CD4-positive, alpha-beta T cell (primary cell): ENCODE measurements at regions of chr5 and their contacts with region 1.

Region 1: GRCh38 chr5:132829742-132830435 is 558 bp downstream of the SHROOM1 start:
- DNase-seq: peak; percentile 49 to 86 (median 66)
- ATAC-seq: peak; percentile 87
- H3K4me3 ChIP-seq: peak overlapping the region; percentile 40
- H3K4me3 Mint-ChIP-seq: peak overlapping the region; percentile 89
- H3K27ac ChIP-seq: no peak overlapping the region
- H3K27ac Mint-ChIP-seq: no peak overlapping the region
- H3K4me1 ChIP-seq: peaks cover 22% of the 10 kb centered on the region
- H3K4me1 Mint-ChIP-seq: peaks cover 17% of the 10 kb centered on the region
- H3K27me3 ChIP-seq: peaks cover 36 to 50% of the 10 kb centered on the region in 2 experiments
- H3K27me3 Mint-ChIP-seq: peaks cover 62% of the 10 kb centered on the region
- CTCF ChIP-seq: peak; percentile 78

Region 2: GRCh38 chr5:132807163-132807838 is 22.6 kb before region 1 on chr5:
- CTCF ChIA-PET with region 1: no interaction called
- POLR2A ChIA-PET with region 1: no interaction called
- intact Hi-C with region 1: no loop called
- DNase-seq: no peak
- ATAC-seq: no peak
- H3K4me3 ChIP-seq: no peak overlapping the region
- H3K4me3 Mint-ChIP-seq: no peak overlapping the region
- H3K27ac ChIP-seq: no peak overlapping the region
- H3K27ac Mint-ChIP-seq: no peak overlapping the region
- H3K4me1 ChIP-seq: peaks cover 3% of the 10 kb centered on the region
- H3K4me1 Mint-ChIP-seq: peaks cover 8% of the 10 kb centered on the region
- H3K27me3 ChIP-seq: peaks cover 18 to 35% of the 10 kb centered on the region in 2 experiments
- H3K27me3 Mint-ChIP-seq: peaks cover 89% of the 10 kb centered on the region
- CTCF ChIP-seq: no peak

Region 3: DNA sequence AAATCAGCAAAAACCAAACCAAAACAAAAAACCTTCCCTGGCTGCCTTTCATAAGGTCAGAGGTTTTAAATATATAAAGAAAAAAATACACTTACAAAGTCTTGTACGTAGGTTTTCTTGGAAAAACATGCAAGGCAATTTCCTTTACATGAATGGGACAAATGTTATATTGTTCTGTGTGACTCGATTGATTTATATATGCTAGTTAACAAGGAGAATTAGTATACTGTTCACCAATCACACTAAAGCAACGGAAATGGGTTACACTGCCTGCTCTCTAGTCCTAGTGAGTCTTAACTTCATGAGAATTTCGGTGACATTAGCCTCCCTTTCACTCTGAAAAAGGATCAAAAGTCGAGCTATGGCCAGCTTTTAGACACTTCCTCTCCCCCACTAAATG is 30.9 kb after region 1 on chr5:
- CTCF ChIA-PET with region 1: interaction called, 7 read pairs
- POLR2A ChIA-PET with region 1: no interaction called
- intact Hi-C with region 1: loop called in 1 of 2 experiments (anchors 1 kb)
- DNase-seq: no peak
- ATAC-seq: no peak
- H3K4me3 ChIP-seq: no peak overlapping the region
- H3K4me3 Mint-ChIP-seq: no peak overlapping the region
- H3K27ac ChIP-seq: no peak overlapping the region
- H3K27ac Mint-ChIP-seq: no peak overlapping the region
- H3K4me1 ChIP-seq: peaks cover 5% of the 10 kb centered on the region
- H3K4me1 Mint-ChIP-seq: peaks cover 6% of the 10 kb centered on the region
- H3K27me3 ChIP-seq: no peaks in the 10 kb centered on the region
- H3K27me3 Mint-ChIP-seq: peaks cover 5% of the 10 kb centered on the region
- CTCF ChIP-seq: no peak

Region 4: GRCh38 chr5:132883261-132883834 is 53.5 kb after region 1 on chr5:
- CTCF ChIA-PET with region 1: interaction called, 13 read pairs
- POLR2A ChIA-PET with region 1: no interaction called
- intact Hi-C with region 1: loop called (anchors 1 to 5 kb)
- DNase-seq: peak in 5 of 14 experiments; percentile 7 to 73 (median 54)
- ATAC-seq: peak; percentile 83
- H3K4me3 ChIP-seq: no peak overlapping the region
- H3K4me3 Mint-ChIP-seq: no peak overlapping the region
- H3K27ac ChIP-seq: no peak overlapping the region
- H3K27ac Mint-ChIP-seq: peak overlapping the region; percentile 0
- H3K4me1 ChIP-seq: no peaks in the 10 kb centered on the region
- H3K4me1 Mint-ChIP-seq: no peaks in the 10 kb centered on the region
- H3K27me3 ChIP-seq: no peaks in the 10 kb centered on the region
- H3K27me3 Mint-ChIP-seq: no peaks in the 10 kb centered on the region
- CTCF ChIP-seq: peak; percentile 48